Activated CD8-positive, alpha-beta T cell treated with anti-CD3 and anti-CD28 coated beads, Interleukin-2, amount 10 ng/mL, durations not matched to agents 7 days and 5 days (primary cell): ENCODE measurements at regions of chr14 and their contacts with region 1.

Region 1: DNA sequence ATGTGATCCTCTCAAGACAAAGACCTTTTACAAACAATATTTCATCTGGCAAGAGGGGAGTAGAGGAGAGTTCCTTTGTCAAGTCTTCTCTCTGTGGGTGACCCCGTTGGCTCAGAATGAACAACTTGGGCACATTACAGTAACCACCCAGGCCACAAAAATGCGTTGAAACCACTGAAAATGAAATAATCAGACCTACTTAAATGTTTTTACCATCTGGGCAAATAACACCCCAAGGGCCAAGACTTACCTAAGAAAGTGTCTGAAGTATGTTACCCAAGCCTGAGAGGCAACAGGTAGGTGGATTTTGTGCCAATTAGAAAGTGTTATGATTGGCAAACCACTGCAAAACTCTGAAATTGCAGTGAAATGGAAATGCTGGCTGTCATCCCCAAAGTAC is 1.3 kb downstream of the TC2N start:
- DNase-seq: peak; percentile 67
- ATAC-seq: peak; percentile 6
- H3K4me3 Mint-ChIP-seq: peak overlapping the region; percentile 94
- H3K27ac Mint-ChIP-seq: peak overlapping the region; percentile 96
- H3K4me1 Mint-ChIP-seq: peaks cover 91% of the 10 kb centered on the region
- H3K27me3 Mint-ChIP-seq: no peaks in the 10 kb centered on the region

Region 2: DNA sequence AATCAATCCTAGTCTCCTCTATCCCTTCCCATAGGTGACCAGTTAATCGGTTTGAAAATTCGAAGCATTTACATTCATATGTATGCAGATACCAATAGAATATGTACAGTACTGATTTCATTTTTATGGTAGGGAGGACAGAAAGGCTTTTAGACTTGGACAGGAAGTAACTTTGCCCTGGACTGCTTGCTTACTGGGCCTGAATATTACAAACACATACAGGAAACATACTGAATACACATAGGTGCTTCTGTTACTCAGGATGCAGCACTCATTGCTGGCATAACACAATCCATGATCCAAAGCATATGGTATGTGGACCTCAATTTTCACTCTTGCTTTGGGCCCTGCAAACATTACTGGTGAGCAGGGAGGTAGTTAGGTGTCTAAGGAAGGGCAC is 205.3 kb before region 1 on chr14:
- CTCF ChIA-PET with region 1: no interaction called
- POLR2A ChIA-PET with region 1: no interaction called
- DNase-seq: no peak
- ATAC-seq: no peak
- H3K4me3 Mint-ChIP-seq: no peak overlapping the region
- H3K27ac Mint-ChIP-seq: no peak overlapping the region
- H3K4me1 Mint-ChIP-seq: no peaks in the 10 kb centered on the region
- H3K27me3 Mint-ChIP-seq: peaks cover 2% of the 10 kb centered on the region

Region 3: DNA sequence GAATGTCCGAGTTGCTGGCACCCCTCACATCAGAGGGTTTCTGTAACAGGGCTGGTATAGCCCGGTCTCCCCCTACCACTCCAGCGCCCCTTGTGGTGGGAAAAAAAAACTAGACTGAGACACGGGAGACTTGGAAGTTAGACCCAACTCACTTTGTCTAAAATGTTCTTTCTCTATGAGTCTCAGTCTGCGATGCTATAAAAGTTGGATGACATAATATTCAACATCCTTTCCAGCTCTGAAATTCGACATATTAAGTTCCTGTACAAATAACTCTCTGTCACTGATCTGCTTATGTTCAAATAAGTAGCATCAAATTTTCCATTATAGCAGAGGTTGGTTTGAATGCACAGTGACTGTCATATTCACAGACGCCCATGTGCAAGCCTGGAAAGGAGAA is 26.9 kb after region 1 on chr14:
- CTCF ChIA-PET with region 1: interaction called, 15 read pairs
- POLR2A ChIA-PET with region 1: interaction called, 11 read pairs
- DNase-seq: no peak
- ATAC-seq: no peak
- H3K4me3 Mint-ChIP-seq: no peak overlapping the region
- H3K27ac Mint-ChIP-seq: peak overlapping the region; percentile 53
- H3K4me1 Mint-ChIP-seq: peaks cover 58% of the 10 kb centered on the region
- H3K27me3 Mint-ChIP-seq: peaks cover 3% of the 10 kb centered on the region

Region 4: DNA sequence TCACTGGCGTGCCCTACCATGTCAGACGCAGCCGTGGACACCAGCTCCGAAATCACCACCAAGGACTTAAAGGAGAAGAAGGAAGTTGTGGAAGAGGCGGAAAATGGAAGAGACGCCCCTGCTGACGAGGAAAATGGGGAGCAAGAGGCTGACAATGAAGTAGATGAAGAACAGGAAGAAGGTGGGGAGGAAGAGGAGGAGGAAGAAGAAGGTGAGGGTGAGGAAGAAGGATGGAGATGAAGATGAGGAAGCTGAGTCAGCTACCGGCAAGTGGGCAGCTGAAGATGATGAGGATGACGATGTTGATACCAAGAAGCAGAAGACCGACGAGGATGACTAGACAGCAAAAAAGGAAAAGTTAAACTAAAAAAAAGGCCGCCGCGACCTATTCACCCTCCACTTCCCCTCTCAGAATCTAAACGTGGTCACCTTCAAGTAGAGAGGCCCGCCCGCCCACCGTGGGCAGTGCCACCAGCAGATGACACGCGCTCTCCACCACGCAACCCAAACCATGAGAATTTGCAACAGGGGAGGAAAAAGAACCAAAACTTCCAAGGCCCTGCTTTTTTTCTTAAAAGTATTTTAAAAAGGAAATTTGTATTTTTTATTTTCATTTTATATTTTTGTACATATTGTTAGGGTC is 160.6 kb after region 1 on chr14:
- CTCF ChIA-PET with region 1: no interaction called
- POLR2A ChIA-PET with region 1: no interaction called
- DNase-seq: no peak
- ATAC-seq: no peak
- H3K4me3 Mint-ChIP-seq: no peak overlapping the region
- H3K27ac Mint-ChIP-seq: no peak overlapping the region
- H3K4me1 Mint-ChIP-seq: peaks cover 11% of the 10 kb centered on the region
- H3K27me3 Mint-ChIP-seq: no peaks in the 10 kb centered on the region